ENCODE measurements at regions of chr1 and their contacts with region 1.

Region 1: GRCh38 chr1:26233903-26234643 is at the start of gene CEP85:
- DNase-seq: peak; percentile 97 to 99
- ATAC-seq: peak; percentile 95
- total RNA-seq, gene CEP85: 11.4 to 16.7 TPM

Region 2: DNA sequence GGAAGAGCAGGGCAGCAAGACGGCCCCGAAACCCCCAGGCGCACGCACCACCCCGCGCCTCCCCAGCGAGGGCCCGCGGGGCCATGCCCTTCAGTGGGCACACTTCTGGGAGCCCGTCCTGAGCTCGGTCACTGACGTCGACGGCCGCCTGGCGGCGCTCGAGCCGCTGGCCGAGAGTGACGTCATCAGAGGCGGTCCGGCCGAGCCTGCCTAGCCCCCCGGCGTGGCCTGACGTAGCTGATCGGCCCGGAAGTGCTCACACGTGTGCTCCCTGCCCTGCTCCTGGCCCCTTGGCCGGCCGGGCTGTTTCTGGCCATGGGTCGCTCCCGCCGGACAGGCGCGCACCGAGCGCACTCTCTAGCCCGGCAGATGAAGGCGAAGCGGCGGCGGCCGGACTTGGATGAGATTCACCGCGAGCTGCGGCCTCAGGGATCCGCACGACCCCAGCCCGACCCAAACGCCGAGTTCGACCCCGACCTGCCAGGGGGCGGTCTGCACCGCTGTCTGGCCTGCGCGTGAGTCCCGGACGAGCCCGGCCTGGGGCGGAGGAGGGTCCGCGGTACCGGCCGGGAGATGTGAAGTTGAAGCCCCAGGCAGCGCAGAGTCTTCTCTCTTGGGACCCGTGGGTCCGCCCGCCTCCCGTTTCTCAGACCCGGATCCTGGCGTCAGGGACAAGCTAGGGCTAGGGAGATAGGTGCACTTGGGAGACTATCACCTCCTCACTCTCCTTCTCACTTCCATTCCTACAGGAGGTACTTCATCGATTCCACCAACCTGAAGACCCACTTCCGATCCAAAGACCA is 64.2 kb before region 1 on chr1 and contains the start of gene ZNF593:
- intact Hi-C with region 1: loop called in 1 of 2 experiments (anchors 10 kb)
- DNase-seq: peak; percentile 92 to 94
- ATAC-seq: peak; percentile 97
- total RNA-seq, gene ZNF593: 17.6 to 21.2 TPM

Region 3: DNA sequence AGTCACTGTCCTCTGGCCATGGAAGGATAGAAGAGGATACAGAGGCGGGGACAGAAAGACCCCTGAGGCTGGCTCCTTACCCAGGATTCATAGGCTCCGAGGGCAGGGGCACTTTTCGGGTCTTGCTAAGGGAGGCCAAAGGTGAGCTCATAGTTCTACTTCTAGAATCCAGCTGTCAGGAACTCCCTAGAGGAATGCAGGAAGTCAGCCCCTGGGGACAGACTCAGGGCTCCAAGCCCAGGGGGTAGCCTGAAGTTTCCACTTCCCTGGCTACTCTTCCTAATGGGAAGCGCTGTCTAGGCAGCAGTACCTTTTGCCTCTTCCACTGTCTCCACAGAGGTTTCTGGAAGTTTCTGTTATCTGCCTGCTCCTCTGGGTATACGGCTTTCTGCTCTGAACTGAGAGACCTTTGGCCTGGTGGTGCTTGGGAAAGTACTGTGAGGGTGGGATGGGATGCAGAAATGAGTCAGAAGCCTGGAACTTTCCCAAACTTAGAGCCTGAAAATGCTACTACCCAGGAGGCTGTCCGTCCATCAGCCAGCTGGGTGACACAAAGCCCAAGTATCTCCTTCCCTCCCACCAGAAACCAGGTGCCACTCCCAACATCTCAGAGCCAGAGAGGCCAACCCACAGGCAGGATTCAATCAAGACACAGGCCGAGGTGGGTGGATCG is 68.8 kb after region 1 on chr1:
- intact Hi-C with region 1: no loop called
- DNase-seq: no peak
- ATAC-seq: no peak

Region 4: GRCh38 chr1:26450908-26451307 is 216.8 kb after region 1 on chr1:
- intact Hi-C with region 1: no loop called
- DNase-seq: no peak
- ATAC-seq: no peak

Measured in left colon (tissue), 2 donors.